Left colon (tissue), 2 donors: ENCODE measurements at regions of chr13 and their contacts with region 1.

Region 1: DNA sequence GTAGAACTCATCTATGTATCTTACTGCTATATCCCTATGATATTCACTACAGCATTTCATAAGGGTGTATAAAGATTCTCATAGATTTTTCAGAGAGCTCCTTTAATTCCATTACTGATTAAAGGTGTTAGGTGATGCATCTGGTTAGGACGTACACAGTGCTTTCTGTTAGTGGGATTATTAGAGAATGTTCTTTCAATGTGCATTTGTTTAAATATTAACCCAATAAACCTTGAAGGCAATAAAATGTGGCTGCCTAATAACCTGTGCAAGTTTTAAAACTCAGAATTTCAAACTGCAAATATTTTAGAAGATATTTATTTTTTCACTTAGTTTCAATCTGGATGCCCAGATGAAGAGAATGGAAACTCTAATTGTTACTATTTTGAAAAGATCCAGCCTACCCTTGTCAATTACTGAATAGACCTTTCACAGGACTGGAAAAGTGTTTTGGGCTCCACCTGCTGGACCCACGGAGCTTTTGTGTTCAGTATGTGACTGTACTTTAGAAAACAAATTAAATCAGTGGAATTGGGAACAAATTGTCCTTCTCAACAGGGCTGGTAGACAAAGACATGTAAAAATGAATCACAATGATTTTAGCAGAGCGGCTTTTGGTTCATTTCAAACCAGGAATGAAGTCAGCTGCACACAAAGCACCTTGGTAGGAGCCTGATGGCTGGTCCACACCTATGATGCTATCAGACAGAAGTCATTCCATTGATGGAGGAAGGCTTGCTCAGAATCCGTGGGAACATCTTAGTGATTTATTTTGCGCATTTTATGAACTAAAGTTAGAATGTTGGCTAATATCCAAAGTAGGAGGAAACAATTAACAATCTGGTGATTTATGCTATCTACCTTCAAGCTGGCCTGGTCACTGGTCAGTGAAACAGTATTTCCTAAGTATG is 89.4 kb upstream of the RAP2A start:
- DNase-seq: peak in 1 of 2 donors; percentile 70
- ATAC-seq: peak; percentile 82

Region 2: GRCh38 chr13:97116754-97117153 is 227.8 kb before region 1 on chr13:
- intact Hi-C with region 1: loop called in 1 of 2 experiments (anchors 5 kb)
- DNase-seq: no peak
- ATAC-seq: no peak

Region 3: GRCh38 chr13:97221989-97222700 is 122.4 kb before region 1 on chr13 and contains the start of gene MBNL2:
- intact Hi-C with region 1: loop called in 1 of 2 experiments (anchors 5 kb)
- DNase-seq: peak; percentile 87 to 95
- ATAC-seq: peak; percentile 90
- total RNA-seq, gene MBNL2: 31.4 to 50.1 TPM

Region 4: GRCh38 chr13:97280478-97280877 is 64.0 kb before region 1 on chr13:
- intact Hi-C with region 1: no loop called
- DNase-seq: no peak
- ATAC-seq: no peak